H1 (cell line): ENCODE measurements at regions of chr15 and their contacts with region 1.

Region 1: DNA sequence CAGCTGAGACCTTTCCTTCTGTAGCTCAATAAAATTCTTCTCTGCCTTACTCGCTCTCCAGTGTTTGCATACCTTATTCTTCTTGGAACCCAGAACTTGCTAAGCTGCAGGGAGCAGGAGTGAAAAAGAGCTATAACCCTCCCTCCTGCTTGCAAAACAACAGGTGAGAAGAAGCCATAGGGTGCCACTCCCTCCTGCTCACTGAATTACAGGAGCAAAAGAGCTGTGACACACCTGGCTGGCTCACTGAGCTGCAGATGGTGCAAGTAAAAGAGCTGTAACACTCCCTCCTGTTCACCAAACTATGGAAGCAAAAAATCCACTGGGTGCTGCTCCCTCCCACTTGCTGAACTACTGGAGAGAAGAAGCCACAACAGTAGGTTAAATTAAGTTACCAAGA is 44.2 kb upstream of the C2CD4B start:
- DNase-seq: no peak
- H3K4me3 ChIP-seq: no peak overlapping the region
- H3K27ac ChIP-seq: peak overlapping the region; percentile 22
- H3K4me1 ChIP-seq: peaks cover 0 to 3% (median under 1%) of the 10 kb centered on the region in 4 experiments; a peak in 3 of 7 replicates
- H3K27me3 ChIP-seq: no peaks in the 10 kb centered on the region
- CTCF ChIP-seq: no peak
- EP300 ChIP-seq: no peak
- POLR2A ChIP-seq: no peak
- RAD21 ChIP-seq: no peak

Region 2: DNA sequence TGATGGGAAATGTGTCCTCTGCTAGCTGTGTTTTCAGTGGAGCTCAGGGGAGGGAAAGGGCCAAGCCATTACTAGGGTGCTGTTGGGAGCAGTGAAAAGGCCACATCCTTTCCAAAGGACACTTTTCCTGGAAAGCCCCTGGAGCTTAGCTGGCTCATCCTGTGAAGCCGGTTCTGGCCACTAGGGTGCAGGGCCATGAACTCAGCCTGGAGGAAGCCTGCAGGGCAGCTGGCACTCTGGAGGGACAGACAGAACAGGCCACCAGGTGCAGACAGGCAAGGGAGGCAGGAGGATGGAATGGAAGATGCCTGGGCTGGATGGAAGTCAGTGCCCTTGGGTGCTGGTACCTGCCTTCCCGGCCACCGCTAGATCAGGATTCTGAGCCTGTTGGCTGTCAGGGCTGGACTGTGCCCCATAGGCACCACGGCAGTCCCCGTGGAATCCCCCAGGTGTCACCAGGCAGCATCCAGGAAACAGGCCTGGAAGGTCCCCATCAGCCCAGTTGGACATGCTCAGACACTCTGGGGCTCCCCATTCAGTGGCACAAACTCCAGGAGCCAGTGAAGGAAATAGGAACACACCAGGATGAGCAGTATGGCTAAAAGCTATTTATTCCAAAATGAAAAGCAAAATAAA is 31.9 kb after region 1 on chr15:
- CTCF ChIA-PET with region 1: interaction called, 12 read pairs
- POLR2A ChIA-PET with region 1: no interaction called
- DNase-seq: peak; percentile 31 to 81
- H3K4me3 ChIP-seq: no peak overlapping the region
- H3K27ac ChIP-seq: no peak overlapping the region
- H3K4me1 ChIP-seq: peaks cover 0 to 2% (median 0%) of the 10 kb centered on the region in 4 experiments; a peak in 1 of 7 replicates
- H3K27me3 ChIP-seq: no peaks in the 10 kb centered on the region
- CTCF ChIP-seq: peak; percentile 76 to 88 (median 88)
- EP300 ChIP-seq: no peak
- POLR2A ChIP-seq: no peak
- RAD21 ChIP-seq: peak; percentile 26 to 61